Dendritic cell treated with granulocyte-macrophage colony-stimulating factor and Interleukin-4, amounts not matched to agents 40 ng/mL and 50 ng/mL, for 4 days (primary cell): ENCODE measurements at regions of chr14 and their contacts with region 1.

Region 1: DNA sequence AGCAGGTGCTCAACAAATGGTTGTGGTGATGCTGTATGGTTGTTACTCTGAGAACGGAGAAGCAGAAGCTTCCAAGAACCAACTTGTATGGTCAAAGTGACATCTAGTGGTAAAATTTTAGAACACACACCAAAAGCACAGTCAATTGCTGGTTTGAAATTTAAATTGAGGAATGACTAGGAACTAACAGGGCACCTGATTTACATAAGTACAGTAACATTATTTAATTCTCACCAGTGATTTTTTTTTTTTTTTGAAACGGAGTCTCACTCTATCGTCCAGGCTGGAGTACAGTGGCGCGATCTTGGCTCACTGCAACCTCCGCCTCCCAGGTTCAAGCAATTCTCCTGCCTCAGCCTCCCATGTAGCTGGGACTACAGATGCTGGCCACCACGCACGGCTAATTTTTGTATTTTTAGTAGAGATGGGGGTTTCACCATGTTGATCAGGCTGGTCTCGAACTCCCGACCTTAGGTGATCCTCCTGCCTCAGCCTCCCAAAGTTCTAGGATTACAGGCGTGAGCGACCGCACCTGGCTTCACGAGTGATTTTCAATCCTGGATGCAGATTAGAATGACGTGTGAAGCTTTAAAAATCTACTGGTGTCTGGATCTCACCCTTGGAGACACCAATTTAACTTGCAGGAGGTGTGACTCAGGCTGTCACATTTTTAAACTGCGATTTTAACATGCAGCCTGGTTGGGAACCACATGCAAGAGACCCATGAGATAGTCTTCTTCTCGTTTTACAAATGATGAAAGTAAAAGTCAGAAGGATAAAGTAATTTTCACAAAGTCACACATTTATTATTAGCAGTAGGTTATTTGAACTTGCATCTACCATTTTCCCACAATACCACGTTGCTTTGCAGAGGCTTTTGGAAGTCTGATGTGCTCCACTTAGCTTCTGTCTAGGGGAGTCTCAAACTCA is 14.1 kb upstream of the NUMB start:
- H3K4me3 Mint-ChIP-seq: no peak overlapping the region
- H3K27ac Mint-ChIP-seq: no peak overlapping the region
- H3K4me1 Mint-ChIP-seq: peaks cover 33% of the 10 kb centered on the region
- H3K27me3 Mint-ChIP-seq: peaks cover 16% of the 10 kb centered on the region

Region 2: GRCh38 chr14:73173092-73173735 is 299.2 kb before region 1 on chr14:
- intact Hi-C with region 1: no loop called
- H3K4me3 Mint-ChIP-seq: no peak overlapping the region
- H3K27ac Mint-ChIP-seq: no peak overlapping the region
- H3K4me1 Mint-ChIP-seq: peaks cover 20% of the 10 kb centered on the region
- H3K27me3 Mint-ChIP-seq: no peaks in the 10 kb centered on the region

Region 3: GRCh38 chr14:73231981-73232851 is 240.2 kb before region 1 on chr14:
- intact Hi-C with region 1: loop called (anchors 10 kb)
- H3K4me3 Mint-ChIP-seq: no peak overlapping the region
- H3K27ac Mint-ChIP-seq: no peak overlapping the region
- H3K4me1 Mint-ChIP-seq: peaks cover 31% of the 10 kb centered on the region
- H3K27me3 Mint-ChIP-seq: peaks cover 61% of the 10 kb centered on the region

Region 4: DNA sequence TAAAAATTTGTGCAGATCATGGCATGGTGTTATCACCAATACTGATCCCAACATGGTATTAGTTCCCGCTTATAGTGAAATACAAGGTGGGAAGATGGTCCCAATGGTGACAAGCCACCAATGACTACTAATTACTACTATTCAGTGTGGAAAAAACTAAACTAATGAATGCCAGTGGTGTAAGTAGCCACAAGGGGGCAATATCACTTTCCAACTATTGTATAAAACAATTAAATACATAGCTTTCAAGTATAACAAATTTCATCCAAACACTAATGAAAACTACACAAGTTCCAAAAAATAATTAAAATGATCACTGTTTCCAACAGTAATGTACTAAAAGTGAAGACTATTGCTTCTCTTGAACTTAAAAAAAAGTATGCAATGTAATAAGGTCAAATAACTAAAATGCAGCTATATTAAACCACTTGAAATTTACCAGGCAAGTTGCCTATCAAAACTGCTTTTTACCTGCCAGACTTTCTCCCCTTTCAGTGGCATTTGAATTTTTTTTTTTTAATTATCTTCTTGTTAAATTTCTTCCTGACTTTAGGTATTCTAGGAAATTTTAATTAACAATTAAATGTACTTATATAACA is 177.2 kb before region 1 on chr14:
- intact Hi-C with region 1: loop called (anchors 1 kb)
- H3K4me3 Mint-ChIP-seq: no peak overlapping the region
- H3K27ac Mint-ChIP-seq: no peak overlapping the region
- H3K4me1 Mint-ChIP-seq: no peaks in the 10 kb centered on the region
- H3K27me3 Mint-ChIP-seq: no peaks in the 10 kb centered on the region

Region 5: GRCh38 chr14:73426877-73427276 is 45.6 kb before region 1 on chr14:
- intact Hi-C with region 1: no loop called
- H3K4me3 Mint-ChIP-seq: no peak overlapping the region
- H3K27ac Mint-ChIP-seq: peak overlapping the region; percentile 77
- H3K4me1 Mint-ChIP-seq: peaks cover 50% of the 10 kb centered on the region
- H3K27me3 Mint-ChIP-seq: no peaks in the 10 kb centered on the region